Sciatic nerve (tissue), 2 donors: ENCODE measurements at regions of chr9 and their contacts with region 1.

Region 1: GRCh38 chr9:31623511-31623910 is 760.9 kb upstream of the ACO1 start:
- DNase-seq: no peak
- ATAC-seq: no peak

Region 2: GRCh38 chr9:31556667-31557463 is 66.6 kb before region 1 on chr9:
- intact Hi-C with region 1: loop called (anchors 2 kb)
- DNase-seq: no peak
- ATAC-seq: no peak